Posterior vena cava (tissue), 2 donors: ENCODE measurements at regions of chr12 and their contacts with region 1.

Region 1: DNA sequence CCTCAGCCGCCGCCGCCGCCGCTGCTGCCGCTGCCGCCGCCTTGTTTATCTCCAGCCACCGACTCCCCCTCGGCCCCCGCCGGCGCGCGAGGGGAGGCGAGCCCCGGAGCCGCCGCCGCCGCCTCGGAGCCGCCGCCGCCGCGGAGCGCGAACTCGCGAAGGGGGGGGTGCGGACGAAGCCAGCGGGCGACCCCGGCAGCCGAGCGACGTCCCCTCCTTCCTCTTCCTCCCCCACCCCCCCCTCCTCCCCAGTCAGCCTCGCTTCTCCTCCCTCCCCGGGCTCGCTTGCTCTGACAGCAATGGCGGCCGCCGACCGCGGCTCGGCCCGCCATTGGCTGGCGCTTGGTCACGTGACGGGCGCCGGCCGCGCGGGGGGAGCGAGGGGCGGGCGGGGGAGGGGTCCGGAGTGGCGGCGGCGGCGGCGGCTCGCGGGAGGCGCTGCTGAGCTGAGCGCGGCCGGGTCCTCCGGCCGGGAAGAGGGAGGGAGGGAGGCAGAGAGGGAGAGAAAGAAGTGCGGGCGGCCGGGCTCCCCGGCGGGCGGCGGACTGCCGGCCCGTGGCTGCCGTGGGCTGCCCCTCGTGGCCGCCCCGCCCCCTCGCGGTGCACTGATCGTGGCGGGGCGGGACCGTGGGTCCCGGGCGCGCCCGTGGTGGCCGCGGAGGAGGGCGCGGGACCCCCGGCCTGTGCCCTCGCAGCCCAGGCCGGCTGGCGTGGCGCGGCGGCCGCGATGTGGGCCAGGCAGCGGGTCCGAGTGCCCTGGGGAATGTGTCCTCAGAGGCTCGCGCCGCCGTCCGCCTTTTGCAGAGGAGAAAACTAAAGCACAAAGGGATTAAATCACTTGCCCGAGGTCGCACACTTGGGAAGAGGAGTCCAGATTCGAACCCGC is at the start of gene MED13L:
- DNase-seq: peak; percentile 96
- total RNA-seq, gene MED13L: 133 to 176 TPM

Region 2: DNA sequence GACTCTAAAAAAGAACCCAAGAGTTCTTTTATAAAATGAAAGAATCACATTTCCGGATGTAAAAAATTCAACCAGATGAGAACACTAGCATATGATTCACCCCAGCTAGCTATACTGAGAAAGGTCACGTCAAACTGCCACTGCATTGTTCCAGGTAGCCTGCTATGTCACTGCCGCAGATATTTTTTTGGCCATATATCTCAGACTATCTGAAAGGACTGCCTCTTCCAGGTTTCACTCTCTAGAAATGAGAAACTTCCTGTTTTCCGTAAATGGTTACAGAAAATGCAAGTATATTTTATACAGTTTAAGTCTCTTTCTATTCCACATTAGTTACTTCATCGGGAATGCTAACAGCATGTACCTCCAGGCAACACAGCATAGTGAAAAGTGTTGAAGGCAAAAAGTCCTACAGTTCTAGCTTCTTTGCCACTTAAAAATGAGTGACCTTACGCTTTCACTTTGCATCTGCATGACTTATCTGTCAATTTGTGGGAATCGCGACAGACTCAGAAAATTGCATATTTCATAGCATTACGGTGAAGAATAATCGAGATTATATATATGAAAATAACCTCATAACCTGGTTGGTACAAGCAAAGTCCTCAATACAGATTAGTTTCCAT is 105.3 kb before region 1 on chr12:
- intact Hi-C with region 1: no loop called
- DNase-seq: no peak

Region 3: DNA sequence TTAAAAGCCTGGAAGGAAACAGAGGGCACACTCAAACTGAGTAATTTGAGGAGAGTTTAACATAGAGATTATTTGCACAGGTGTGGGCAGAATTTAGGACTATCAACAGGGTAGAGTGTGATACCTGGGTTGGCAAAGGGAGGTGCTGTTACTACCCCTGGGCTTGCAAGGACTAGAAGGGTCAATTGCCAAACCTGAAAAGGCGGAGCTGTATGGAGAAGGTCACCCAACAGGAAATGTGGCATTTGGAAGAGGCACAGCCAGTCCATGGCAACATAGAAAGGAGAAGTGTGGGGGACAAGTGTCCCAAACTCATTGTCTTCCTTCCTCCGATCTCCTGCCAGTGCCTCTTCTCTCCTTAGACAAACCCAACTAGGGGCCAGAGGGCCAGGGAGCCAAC is 21.4 kb after region 1 on chr12:
- intact Hi-C with region 1: no loop called
- DNase-seq: no peak

Region 4: DNA sequence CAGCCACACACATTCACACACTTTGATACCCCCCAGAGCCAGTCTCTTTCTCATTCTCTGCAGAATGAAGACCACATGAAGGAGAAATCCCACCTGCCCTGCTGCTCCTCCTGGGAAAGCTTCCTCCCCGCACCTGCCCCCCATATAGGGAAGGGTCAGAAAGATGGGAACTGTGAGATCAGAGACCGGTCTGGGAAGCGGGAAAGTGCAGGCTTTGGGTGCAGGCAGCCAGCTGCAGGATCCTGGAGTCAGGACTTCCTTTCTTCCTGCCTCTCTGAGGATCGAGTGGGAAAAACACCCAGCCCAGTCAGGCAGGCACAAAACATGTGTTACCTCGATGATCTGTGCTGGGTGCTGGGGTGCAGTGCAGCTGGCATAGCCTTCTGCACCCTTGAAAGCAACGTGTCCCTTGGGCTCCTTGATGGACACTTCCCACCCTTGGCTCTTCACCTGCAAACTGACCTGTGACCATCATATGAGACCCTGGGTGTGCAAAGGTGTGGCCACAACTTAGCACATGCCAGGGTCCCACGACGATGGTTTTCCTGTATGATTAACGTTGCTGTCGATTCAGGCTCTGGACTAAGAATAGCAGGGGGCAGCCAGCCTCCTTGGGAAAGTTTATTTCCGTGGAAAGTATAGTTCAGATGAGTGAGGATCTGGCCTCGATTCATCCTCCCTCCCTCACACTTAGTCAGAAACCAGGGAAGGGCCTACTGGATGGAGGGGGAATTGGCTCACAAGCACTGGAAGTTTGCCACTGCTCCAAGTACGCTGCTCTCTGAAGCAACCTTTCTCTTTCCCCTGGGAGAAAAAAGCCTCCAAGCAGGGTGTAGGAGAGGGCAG is 105.3 kb after region 1 on chr12:
- intact Hi-C with region 1: loop called in 1 of 2 experiments (anchors 5 kb)
- DNase-seq: peak; percentile 91

Region 5: DNA sequence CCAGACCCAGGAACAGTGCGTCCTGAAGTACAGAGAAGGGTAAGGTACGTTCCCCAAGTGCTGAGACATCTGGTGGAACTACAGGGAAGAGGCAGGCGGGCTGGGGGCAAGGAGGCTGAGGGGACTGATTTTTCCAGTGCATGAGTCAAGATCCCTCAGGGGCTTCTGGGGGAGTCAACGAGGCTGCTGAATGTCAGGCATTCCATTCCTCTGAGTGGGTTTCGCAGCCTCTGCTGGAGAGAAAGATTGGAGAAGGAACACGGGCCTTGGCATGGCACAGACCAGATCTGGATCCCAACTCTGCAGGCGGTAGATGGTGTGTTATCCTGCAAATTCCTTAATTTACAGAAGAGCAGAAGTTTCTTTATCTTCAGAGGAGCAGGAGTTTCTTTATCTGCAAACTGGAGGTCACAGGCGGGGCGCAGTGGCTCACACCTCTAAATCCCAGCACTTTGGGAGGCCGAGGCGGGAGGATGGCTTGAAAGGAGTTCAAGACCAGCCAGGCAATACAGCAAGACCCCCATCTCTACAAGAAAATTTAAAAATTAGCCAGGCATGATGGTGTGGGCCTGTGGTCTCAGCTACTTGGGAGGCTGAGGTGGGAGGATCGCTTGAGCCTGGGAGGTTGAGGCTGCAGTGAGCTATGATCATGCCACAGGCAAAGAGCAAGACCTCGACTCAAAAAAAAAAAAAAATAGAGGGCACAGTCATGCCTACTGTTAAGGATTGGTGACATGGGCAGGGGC is 148.9 kb after region 1 on chr12:
- intact Hi-C with region 1: loop called in 1 of 2 experiments (anchors 10 kb)
- DNase-seq: peak; percentile 91

Region 6: DNA sequence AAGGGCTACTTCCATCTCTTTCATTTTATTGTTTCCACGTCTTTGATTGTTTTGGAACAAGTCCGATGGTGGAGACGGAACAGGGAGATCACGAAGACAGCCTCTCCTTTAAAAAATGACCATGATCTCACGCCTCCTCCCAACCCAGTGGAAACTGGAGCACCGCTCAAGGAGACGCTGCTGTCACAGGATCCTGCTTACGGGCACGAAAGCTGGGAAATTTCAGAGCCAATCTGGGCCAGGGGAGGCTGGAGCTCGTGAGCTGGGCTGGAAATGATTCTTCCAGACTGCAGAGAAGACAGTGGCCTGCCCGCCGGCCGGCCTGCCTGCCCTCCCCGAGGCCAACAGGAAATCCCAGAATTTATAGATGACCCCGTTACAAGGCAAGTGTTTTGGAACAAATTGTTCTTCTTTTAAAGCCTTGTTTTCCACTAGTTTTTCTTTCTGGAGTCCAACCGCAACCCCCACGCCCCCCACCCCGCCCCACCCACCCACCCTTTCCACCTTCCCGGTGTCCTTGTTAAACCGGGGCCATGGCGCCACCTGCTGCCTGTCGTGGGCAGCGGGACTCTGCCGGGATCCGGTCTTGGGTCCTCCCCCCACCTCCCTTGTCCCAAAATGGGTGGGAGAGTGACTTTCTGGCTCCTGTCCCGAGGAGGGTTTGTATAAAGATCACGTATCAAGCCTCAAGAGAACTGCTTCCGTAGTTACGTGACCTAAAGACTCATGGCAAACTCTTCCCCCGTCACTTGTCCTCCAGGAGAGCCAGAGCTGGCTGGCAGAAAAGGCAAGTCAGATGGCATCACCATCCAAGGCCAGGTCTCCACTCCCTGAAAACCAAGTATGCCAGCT is 321.9 kb after region 1 on chr12:
- intact Hi-C with region 1: loop called in 1 of 2 experiments (anchors 10 kb)
- DNase-seq: peak; percentile 96

Region 7: DNA sequence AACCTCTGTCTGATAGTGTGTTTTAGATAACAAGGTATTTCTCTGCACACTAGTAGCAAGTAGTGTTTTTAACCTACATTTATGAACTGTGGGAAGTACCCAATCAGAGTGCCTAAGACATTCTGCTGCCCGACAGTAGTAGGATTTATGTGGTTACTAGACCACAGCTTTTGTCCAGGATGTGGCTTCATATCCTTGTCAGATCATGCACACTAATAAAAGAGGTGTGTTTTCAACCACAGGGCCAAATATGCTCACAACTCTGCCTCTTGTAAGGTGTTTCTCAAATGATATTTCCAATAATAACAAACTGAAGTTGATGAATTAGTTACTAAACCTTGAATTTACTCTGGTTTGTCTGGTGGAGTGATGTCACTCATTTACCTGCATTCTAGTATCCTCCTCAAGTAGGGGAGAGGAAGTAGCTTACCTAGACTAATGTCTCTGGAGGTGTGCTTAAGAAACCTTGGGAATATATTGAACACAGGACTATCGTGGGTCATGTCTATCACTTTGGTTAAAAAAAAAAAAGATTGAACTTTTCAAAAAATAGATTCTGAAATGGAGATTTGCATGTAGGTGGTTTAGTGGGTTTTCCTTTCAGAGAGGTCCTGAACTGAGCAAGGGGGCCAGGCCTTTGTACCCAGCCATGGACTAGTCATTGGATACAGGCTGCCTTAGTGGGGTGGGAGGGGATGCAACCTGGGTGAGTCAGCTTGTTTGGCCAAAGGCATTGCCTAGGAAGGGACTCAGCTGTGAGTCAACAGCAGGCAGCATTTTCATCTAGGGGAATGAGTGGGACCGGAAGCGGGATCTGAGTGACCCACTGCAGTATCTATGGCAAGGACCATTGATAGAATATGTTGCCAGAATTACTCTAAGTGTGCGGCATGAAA is 647.2 kb after region 1 on chr12:
- intact Hi-C with region 1: loop called in 1 of 2 experiments (anchors 5 kb)
- DNase-seq: no peak